ENCODE measurements at regions of chr9 and their contacts with region 1.

Region 1: DNA sequence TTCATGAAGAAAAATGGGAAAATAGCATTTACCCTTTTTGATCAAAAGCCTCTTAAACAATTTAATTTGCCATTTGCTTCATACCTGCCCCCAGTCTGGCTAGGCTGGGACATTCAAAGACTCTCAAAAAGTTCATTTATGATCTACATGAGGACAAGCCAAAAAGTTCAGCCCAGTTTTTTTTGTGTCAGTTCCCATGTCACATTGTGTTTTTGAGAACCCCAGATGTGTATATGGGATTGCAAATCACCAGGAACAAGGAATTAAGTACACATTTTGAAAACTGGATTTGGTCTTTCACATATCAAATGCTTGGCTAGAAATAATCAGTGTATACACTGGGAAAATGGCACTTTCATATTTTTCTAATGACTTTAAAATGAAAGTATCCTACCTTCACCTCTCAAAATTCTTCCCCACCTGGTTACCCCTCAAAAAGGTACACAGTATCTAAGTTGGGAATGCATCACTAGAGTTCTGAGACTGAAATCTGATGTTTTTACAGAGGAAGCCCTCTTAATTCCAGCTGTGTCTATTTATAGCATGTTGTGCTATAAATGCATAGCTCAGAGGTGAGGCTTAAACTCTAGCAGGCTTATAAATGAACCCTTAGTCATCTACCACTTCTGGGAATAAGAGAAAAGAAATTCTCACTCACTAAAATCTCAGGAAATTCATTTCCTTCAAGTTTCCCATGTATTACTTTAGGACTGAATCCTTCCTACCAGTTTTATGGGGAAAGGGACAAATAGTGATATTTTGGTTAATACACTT is 9.3 kb downstream of the STOM start:
- DNase-seq: no peak
- ATAC-seq: no peak
- H3K4me3 ChIP-seq: no peak overlapping the region
- H3K27ac ChIP-seq: peak overlapping the region; percentile 23; the same call in 1 of the 2 replicates
- H3K4me1 ChIP-seq: peaks cover 20% of the 10 kb centered on the region
- H3K27me3 ChIP-seq: no peaks in the 10 kb centered on the region
- CTCF ChIP-seq: no peak

Region 2: GRCh38 chr9:119884438-119884837 is 1476.3 kb before region 1 on chr9:
- CTCF ChIA-PET with region 1: no interaction called
- POLR2A ChIA-PET with region 1: no interaction called
- in situ Hi-C with region 1: no loop called
- intact Hi-C with region 1: no loop called
- DNase-seq: no peak
- ATAC-seq: no peak
- H3K4me3 ChIP-seq: no peak overlapping the region
- H3K27ac ChIP-seq: no peak overlapping the region
- H3K4me1 ChIP-seq: no peaks in the 10 kb centered on the region
- H3K27me3 ChIP-seq: no peaks in the 10 kb centered on the region
- CTCF ChIP-seq: no peak

Region 3: GRCh38 chr9:121344184-121344583 is 16.6 kb before region 1 on chr9:
- CTCF ChIA-PET with region 1: no interaction called
- POLR2A ChIA-PET with region 1: interaction called, 13 read pairs
- in situ Hi-C with region 1: no loop called
- intact Hi-C with region 1: no loop called
- DNase-seq: no peak
- ATAC-seq: no peak
- H3K4me3 ChIP-seq: no peak overlapping the region
- H3K27ac ChIP-seq: no peak overlapping the region
- H3K4me1 ChIP-seq: no peaks in the 10 kb centered on the region
- H3K27me3 ChIP-seq: no peaks in the 10 kb centered on the region
- CTCF ChIP-seq: no peak

Region 4: GRCh38 chr9:121548666-121549065 is 187.9 kb after region 1 on chr9:
- CTCF ChIA-PET with region 1: no interaction called
- POLR2A ChIA-PET with region 1: no interaction called
- in situ Hi-C with region 1: no loop called
- intact Hi-C with region 1: no loop called
- DNase-seq: no peak
- ATAC-seq: no peak
- H3K4me3 ChIP-seq: no peak overlapping the region
- H3K27ac ChIP-seq: no peak overlapping the region
- H3K4me1 ChIP-seq: no peaks in the 10 kb centered on the region
- H3K27me3 ChIP-seq: no peaks in the 10 kb centered on the region
- CTCF ChIP-seq: no peak

Measured in Panc1 (cell line).